GM12878 (cell line): ENCODE measurements at regions of chr15 and their contacts with region 1.

Region 1: DNA sequence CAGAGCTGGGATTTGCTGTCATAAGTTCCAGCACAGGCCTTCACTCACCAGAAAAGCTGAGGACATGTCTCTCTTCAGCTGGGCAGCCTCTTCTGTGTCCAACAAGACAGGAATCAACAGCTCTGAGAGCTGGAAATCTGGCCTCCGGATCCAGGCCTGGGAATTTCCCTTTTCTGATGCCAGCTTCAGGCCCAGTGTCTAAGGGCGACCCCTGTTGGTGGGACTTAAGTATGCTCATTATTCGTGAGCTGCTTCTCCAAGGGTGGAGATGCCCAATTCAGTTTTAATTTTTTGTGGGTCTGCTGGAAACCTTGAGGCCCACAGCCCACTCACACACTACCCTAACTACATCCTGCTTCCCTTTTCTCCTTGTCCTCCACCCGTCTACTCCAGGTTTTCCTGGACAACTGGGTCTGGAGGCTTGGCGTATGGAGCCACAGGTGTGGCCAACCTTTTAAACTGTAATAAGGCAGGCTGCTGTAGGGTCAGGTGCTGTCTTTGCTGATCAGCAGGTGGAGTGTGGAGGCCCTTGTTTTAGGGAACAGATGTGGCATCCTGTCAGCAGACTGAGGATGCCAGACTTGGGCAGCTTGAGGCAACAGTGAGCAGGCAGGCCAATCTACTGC is 2.6 kb upstream of the CEMIP start:
- DNase-seq: no peak
- ATAC-seq: peak; percentile 72
- H3K4me3 ChIP-seq: no peak overlapping the region
- H3K27ac ChIP-seq: no peak overlapping the region
- H3K4me1 ChIP-seq: no peaks in the 10 kb centered on the region
- H3K27me3 ChIP-seq: peaks cover 18 to 19% of the 10 kb centered on the region in 2 experiments
- CTCF ChIP-seq: peak; percentile 86 to 94 (median 89)
- EP300 ChIP-seq: no peak
- POLR2A ChIP-seq: no peak
- RAD21 ChIP-seq: peak; percentile 93

Region 2: GRCh38 chr15:80455668-80456442 is 320.7 kb before region 1 on chr15:
- CTCF ChIA-PET with region 1: interaction called, 130 read pairs
- POLR2A ChIA-PET with region 1: no interaction called
- RAD21 ChIA-PET with region 1: interaction called, 49 read pairs
- SMC1A ChIA-PET with region 1: interaction called, 44 read pairs
- in situ Hi-C with region 1: loop called (anchors 5 kb)
- intact Hi-C with region 1: loop called (anchors 1 kb)
- DNase-seq: peak; percentile 16
- ATAC-seq: peak; percentile 88
- H3K4me3 ChIP-seq: no peak overlapping the region
- H3K27ac ChIP-seq: no peak overlapping the region
- H3K4me1 ChIP-seq: no peaks in the 10 kb centered on the region
- H3K27me3 ChIP-seq: no peaks in the 10 kb centered on the region; a peak in 3 of 4 replicates
- CTCF ChIP-seq: peak; percentile 90 to 98 (median 97); a peak in 5 of 6 replicates
- EP300 ChIP-seq: no peak
- POLR2A ChIP-seq: no peak
- RAD21 ChIP-seq: peak; percentile 96

Region 3: GRCh38 chr15:80599359-80599758 is 177.2 kb before region 1 on chr15:
- CTCF ChIA-PET with region 1: interaction called, 12 read pairs
- POLR2A ChIA-PET with region 1: no interaction called
- RAD21 ChIA-PET with region 1: interaction called, 10 read pairs
- SMC1A ChIA-PET with region 1: interaction called, 10 read pairs
- in situ Hi-C with region 1: no loop called
- intact Hi-C with region 1: no loop called
- DNase-seq: no peak
- ATAC-seq: no peak
- H3K4me3 ChIP-seq: no peak overlapping the region
- H3K27ac ChIP-seq: no peak overlapping the region
- H3K4me1 ChIP-seq: no peaks in the 10 kb centered on the region
- H3K27me3 ChIP-seq: peaks cover 0 to 1% of the 10 kb centered on the region in 2 experiments; a peak in 1 of 4 replicates
- CTCF ChIP-seq: no peak
- EP300 ChIP-seq: no peak
- POLR2A ChIP-seq: no peak
- RAD21 ChIP-seq: no peak

Region 4: DNA sequence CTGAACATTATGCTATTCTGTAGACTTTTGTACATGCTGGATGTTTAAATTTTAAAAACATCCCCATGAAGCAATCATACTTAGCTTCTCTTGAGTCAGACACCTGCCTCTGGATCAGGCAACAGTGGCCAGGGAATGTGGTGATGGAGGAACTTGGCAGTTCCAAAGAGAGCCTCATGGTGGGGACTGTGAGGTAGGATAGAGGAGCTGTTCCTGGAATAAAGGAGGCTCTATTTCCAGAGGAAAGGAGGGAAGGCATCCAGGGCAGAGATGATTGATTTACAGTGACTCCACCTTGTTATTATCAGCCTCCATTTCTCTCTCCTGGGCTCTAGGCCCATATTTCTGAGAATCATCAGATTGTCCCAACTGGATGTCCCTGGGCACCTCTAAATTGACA is 116.4 kb before region 1 on chr15:
- CTCF ChIA-PET with region 1: interaction called, 19 read pairs
- POLR2A ChIA-PET with region 1: no interaction called
- RAD21 ChIA-PET with region 1: interaction called, 9 read pairs
- SMC1A ChIA-PET with region 1: interaction called, 13 read pairs
- in situ Hi-C with region 1: no loop called
- intact Hi-C with region 1: no loop called
- DNase-seq: no peak
- ATAC-seq: no peak
- H3K4me3 ChIP-seq: no peak overlapping the region
- H3K27ac ChIP-seq: no peak overlapping the region
- H3K4me1 ChIP-seq: no peaks in the 10 kb centered on the region
- H3K27me3 ChIP-seq: no peaks in the 10 kb centered on the region; a peak in 2 of 4 replicates
- CTCF ChIP-seq: peak; percentile 5 to 25 (median 18); a peak in 3 of 6 replicates
- EP300 ChIP-seq: no peak
- POLR2A ChIP-seq: no peak
- RAD21 ChIP-seq: peak; percentile 29

Region 5: GRCh38 chr15:80789296-80789695 is 12.8 kb after region 1 on chr15:
- CTCF ChIA-PET with region 1: interaction called, 15 read pairs
- POLR2A ChIA-PET with region 1: interaction called, 3 read pairs
- RAD21 ChIA-PET with region 1: interaction called, 3 read pairs
- SMC1A ChIA-PET with region 1: interaction called, 6 read pairs
- in situ Hi-C with region 1: no loop called
- intact Hi-C with region 1: no loop called
- DNase-seq: no peak
- ATAC-seq: no peak
- H3K4me3 ChIP-seq: no peak overlapping the region
- H3K27ac ChIP-seq: no peak overlapping the region
- H3K4me1 ChIP-seq: no peaks in the 10 kb centered on the region
- H3K27me3 ChIP-seq: peaks cover 0 to 4% of the 10 kb centered on the region in 2 experiments; a peak in 3 of 4 replicates
- CTCF ChIP-seq: no peak
- EP300 ChIP-seq: no peak
- POLR2A ChIP-seq: no peak
- RAD21 ChIP-seq: no peak